ENCODE measurements at regions of chr11 and their contacts with region 1.

Region 1: GRCh38 chr11:33835143-33835878 is 56.6 kb downstream of the LMO2 start:
- DNase-seq: peak in 2 of 4 experiments; percentile 33 to 74
- ATAC-seq: peak; percentile 78
- H3K4me3 ChIP-seq: no peak overlapping the region
- H3K27ac ChIP-seq: no peak overlapping the region
- H3K4me1 ChIP-seq: no peaks in the 10 kb centered on the region; a peak in 1 of 5 replicates
- H3K27me3 ChIP-seq: peaks cover 10 to 25% of the 10 kb centered on the region in 2 experiments
- CTCF ChIP-seq: peak; percentile 34 to 71 (median 39); a peak in 4 of 6 replicates
- EP300 ChIP-seq: no peak
- POLR2A ChIP-seq: no peak
- RAD21 ChIP-seq: peak; percentile 68 to 88

Region 2: DNA sequence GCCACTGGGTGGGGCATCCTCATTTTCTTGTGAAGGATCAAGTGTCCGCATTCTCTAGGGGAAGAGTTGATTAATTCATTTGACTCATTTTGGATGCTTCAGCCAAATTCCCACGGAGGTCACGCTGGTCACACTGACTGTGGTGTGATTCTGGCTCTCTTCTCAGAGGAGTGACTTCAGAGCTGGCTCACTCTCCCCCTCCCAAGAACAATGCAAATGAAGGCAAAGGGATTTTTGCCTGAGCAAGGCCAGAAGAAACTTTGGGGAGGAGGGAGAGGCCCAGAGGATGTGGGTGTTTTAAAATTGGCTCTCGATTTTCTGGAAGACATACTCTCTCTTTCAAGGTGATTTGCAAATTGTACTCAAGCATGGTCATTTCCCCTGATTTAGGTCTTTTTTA is 107.6 kb after region 1 on chr11:
- CTCF ChIA-PET with region 1: no interaction called
- POLR2A ChIA-PET with region 1: no interaction called
- in situ Hi-C with region 1: no loop called
- intact Hi-C with region 1: no loop called
- DNase-seq: peak in 1 of 4 experiments; percentile 63
- ATAC-seq: no peak
- H3K4me3 ChIP-seq: no peak overlapping the region
- H3K27ac ChIP-seq: peak overlapping the region; percentile 98
- H3K4me1 ChIP-seq: peaks cover 51 to 75% of the 10 kb centered on the region in 2 experiments
- H3K27me3 ChIP-seq: no peaks in the 10 kb centered on the region
- CTCF ChIP-seq: no peak
- EP300 ChIP-seq: no peak
- POLR2A ChIP-seq: no peak
- RAD21 ChIP-seq: no peak

Region 3: GRCh38 chr11:33970984-33971466 is 135.7 kb after region 1 on chr11:
- CTCF ChIA-PET with region 1: interaction called, 20 read pairs
- POLR2A ChIA-PET with region 1: no interaction called
- in situ Hi-C with region 1: no loop called
- intact Hi-C with region 1: loop called (anchors 1 kb)
- DNase-seq: peak; percentile 44 to 86 (median 63)
- ATAC-seq: peak; percentile 96
- H3K4me3 ChIP-seq: no peak overlapping the region
- H3K27ac ChIP-seq: no peak overlapping the region
- H3K4me1 ChIP-seq: peaks cover 0 to 4% of the 10 kb centered on the region in 2 experiments; a peak in 3 of 5 replicates
- H3K27me3 ChIP-seq: no peaks in the 10 kb centered on the region
- CTCF ChIP-seq: peak; percentile 88 to 96 (median 88)
- EP300 ChIP-seq: no peak
- POLR2A ChIP-seq: no peak
- RAD21 ChIP-seq: peak; percentile 99 to 100

Region 4: GRCh38 chr11:33987975-33988580 is 152.8 kb after region 1 on chr11:
- CTCF ChIA-PET with region 1: interaction called, 9 read pairs
- POLR2A ChIA-PET with region 1: interaction called, 3 read pairs
- in situ Hi-C with region 1: no loop called
- intact Hi-C with region 1: loop called (anchors 1 kb)
- DNase-seq: peak; percentile 69 to 93 (median 69)
- ATAC-seq: peak; percentile 99
- H3K4me3 ChIP-seq: no peak overlapping the region
- H3K27ac ChIP-seq: no peak overlapping the region
- H3K4me1 ChIP-seq: peaks cover 4 to 6% of the 10 kb centered on the region in 2 experiments; a peak in 4 of 5 replicates
- H3K27me3 ChIP-seq: no peaks in the 10 kb centered on the region
- CTCF ChIP-seq: peak; percentile 91 to 96 (median 91)
- EP300 ChIP-seq: no peak
- POLR2A ChIP-seq: no peak
- RAD21 ChIP-seq: peak; percentile 71 to 90

Region 5: DNA sequence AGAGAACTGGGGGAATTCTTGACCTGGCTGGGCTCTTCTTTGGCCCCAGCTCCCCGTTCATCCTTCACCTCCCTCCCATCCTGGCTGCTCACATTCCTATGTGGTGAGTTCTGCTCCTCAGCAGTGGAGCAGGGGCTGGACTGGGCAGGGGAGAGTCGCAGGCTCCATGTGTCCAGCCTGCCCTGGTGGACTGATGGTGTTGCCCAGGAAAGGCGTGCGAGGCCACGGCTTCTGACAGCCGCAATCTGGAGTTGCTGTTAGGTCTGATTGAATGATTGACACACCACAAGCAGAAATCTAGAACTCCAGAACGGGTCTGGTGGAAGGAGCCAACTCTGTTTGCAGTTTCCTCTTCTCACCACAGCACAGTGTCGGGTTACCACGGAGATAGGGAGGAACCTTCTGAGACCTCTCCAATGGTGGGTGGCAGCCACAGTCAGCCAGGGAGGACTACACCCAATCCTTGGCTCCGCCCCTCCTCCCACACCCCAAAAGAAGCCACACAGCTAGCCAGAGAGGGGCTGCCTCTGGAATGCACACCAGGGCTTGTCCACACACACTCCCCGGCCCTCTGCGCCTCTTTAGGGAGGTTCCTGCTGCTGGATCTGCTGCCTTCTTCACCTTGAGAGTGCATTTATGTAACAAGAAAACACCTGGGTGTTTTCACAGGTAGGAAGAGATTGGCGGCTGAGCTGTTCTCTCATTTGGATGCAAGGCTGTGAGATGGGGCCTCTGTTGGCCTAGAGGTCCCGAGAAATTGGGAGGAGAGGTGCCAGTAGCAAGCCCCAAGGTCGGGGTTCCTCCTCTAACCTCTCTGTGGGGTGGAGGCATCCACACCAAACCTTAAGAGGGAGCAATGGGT is 1247.2 kb after region 1 on chr11:
- CTCF ChIA-PET with region 1: no interaction called
- POLR2A ChIA-PET with region 1: no interaction called
- in situ Hi-C with region 1: no loop called
- intact Hi-C with region 1: no loop called
- DNase-seq: peak; percentile 76 to 86 (median 84)
- ATAC-seq: peak; percentile 98
- H3K4me3 ChIP-seq: no peak overlapping the region
- H3K27ac ChIP-seq: no peak overlapping the region
- H3K4me1 ChIP-seq: peaks cover 6 to 23% of the 10 kb centered on the region in 2 experiments; a peak in 4 of 5 replicates
- H3K27me3 ChIP-seq: no peaks in the 10 kb centered on the region
- CTCF ChIP-seq: no peak
- EP300 ChIP-seq: no peak
- POLR2A ChIP-seq: no peak
- RAD21 ChIP-seq: no peak

Measured in K562 (cell line).